ENCODE measurements at regions of chr16 and their contacts with region 1.

Region 1: DNA sequence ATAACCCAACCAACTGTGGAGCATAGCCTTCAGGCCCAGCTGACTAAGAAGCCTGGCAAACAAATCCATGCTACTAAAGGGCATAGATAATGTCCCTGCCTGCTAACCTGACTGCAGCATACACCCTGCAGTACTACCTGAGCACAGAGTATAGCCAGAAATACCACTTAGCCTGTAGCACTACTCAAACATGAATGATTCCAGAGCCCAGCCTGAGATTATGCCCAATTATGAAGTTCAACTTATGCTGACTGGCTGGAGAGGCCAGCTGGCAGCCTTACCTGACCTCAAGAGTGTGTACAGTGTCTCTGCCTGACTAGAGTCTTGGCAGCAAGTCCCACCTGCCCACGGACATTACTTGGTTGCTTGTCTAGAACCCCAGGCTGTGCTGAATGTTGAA is 1265.3 kb downstream of the CDH11 start:
- DNase-seq: no peak
- ATAC-seq: no peak
- H3K4me3 ChIP-seq: no peak overlapping the region
- H3K4me3 Mint-ChIP-seq: no peak overlapping the region
- H3K27ac ChIP-seq: no peak overlapping the region
- H3K27ac Mint-ChIP-seq: no peak overlapping the region
- H3K4me1 ChIP-seq: no peaks in the 10 kb centered on the region
- H3K4me1 Mint-ChIP-seq: no peaks in the 10 kb centered on the region
- H3K27me3 ChIP-seq: no peaks in the 10 kb centered on the region
- H3K27me3 Mint-ChIP-seq: no peaks in the 10 kb centered on the region
- CTCF ChIP-seq: no peak

Region 2: GRCh38 chr16:63876103-63876502 is 19.6 kb after region 1 on chr16:
- CTCF ChIA-PET with region 1: no interaction called
- POLR2A ChIA-PET with region 1: no interaction called
- intact Hi-C with region 1: loop called in 1 of 2 experiments (anchors 1 kb)
- DNase-seq: no peak
- ATAC-seq: no peak
- H3K4me3 ChIP-seq: no peak overlapping the region
- H3K4me3 Mint-ChIP-seq: no peak overlapping the region
- H3K27ac ChIP-seq: no peak overlapping the region
- H3K27ac Mint-ChIP-seq: no peak overlapping the region
- H3K4me1 ChIP-seq: no peaks in the 10 kb centered on the region
- H3K4me1 Mint-ChIP-seq: no peaks in the 10 kb centered on the region
- H3K27me3 ChIP-seq: no peaks in the 10 kb centered on the region
- H3K27me3 Mint-ChIP-seq: no peaks in the 10 kb centered on the region
- CTCF ChIP-seq: no peak